Astrocyte of the cerebellum (primary cell): ENCODE measurements at regions of chr17 and their contacts with region 1.

Region 1: GRCh38 chr17:48095611-48096010 is 5.7 kb downstream of the CBX1 start:
- DNase-seq: no peak
- H3K4me3 ChIP-seq: no peak overlapping the region
- CTCF ChIP-seq: no peak

Region 2: DNA sequence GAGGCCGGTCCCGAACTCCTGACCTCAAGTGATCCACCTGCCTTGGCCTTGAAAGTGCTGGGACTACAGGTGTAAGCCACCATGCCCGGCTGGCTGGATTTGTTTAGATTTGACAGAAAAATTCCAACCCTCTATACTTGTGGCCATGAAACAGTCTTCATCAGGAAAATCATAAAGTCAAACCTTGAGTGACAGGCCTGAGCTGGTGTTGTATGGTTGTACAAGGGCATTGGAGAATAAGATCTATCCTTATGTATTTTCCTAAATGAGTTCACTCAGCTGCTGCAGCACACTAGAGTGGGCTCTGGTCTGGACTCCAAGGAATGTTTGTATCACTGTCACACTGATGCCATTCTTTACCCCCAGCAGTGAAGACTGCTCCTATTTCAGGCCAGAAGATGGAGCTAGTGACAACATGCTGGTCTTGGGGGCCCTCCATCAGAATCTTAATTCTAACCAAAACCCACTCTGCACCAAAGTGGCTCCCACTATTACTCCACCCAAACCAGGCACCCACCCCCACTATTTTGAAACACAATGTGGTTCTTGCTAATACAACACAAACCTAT is 39.4 kb after region 1 on chr17:
- in situ Hi-C with region 1: loop called (anchors 5 kb)
- DNase-seq: no peak
- H3K4me3 ChIP-seq: no peak overlapping the region
- CTCF ChIP-seq: no peak